Cardiac septum (tissue), 1 donor: ENCODE measurements at regions of chr2 and their contacts with region 1.

Region 1: DNA sequence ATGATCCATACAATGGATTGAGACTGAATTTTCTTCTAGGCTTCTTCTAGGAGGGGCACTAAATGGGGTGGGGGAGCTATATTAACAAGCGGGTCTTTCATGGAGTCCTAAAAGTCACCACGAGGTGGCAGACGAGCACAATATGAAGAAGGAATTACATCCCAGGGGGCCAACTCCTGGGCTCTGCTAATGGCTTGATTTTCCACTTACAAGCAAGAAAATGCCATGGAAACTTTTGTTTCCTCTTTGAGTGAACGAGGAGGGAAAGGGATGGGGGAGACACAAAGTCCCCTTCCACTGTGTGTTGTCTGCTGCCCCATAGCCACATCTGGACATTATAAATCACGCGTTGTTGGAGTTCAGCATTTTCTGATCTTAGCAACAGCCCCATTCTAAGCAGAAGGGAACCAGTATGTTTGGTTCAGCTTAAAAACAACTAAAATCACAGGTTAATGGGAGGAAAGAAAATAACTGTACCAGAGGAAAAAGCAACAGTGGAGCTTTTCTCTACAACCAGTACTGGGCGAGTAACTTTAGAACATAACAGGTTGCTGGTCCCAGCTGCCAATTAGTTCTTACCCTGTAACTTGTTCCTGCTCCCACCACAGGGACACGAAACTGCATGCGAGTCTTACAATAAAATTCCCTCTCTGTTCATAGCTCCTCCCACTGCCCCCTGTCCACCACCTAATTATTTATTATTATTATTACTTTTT is 285.0 kb upstream of the PARD3B start:
- DNase-seq: no peak

Region 2: DNA sequence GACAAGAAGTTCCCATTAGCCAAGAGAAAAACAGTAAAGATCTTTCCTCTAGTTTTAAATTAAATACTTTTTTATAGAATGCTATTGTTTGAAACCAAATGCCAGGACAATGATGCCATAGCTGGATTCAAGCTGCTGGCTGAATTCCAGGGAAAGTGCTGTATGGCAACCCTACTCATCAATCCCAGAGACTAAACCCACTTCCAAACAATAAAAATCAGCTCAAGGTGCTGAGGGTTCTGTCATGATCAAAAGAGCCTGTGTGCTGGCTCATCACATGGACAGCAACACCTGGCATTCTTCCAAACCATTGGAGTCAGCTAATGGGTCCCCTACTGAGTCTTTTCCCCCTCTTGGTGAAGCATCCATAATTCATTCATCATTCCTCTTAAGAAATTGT is 231.2 kb after region 1 on chr2:
- intact Hi-C with region 1: no loop called
- DNase-seq: no peak

Region 3: DNA sequence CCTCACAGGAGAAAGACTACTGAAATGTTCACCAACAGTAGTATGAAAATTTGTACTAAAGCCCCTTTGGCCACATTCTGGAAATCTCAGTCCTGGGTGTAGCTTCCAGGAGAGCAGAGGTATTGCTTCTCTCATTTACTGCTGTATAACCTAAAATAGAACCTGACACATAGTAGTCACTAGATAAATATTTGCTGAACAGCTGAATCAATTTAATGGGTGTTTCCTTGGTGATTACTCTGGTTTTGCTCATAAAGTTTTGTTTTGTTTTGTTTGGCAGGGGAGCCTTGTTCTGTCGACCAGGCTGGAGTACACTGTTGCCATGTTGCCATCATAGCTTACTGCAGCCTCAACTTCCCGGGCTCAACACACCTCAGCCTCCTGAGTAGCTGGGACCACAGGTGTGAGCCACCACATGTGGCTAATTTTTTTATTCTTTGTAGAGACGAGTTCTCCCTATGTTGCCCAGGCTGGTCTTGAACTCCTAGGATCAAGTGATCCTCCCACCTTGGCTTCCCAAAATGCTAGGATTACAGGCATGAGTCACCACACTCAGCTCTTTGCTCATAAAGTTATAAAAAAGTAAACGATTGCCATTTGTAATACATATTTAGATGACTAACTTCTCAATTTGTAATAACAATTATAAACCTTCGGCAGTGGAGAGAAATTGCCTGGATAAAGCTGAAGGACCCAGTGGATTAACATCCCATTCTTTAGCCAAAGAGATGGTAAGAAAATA is 273.5 kb after region 1 on chr2:
- intact Hi-C with region 1: no loop called
- DNase-seq: no peak

Region 4: GRCh38 chr2:204691911-204692510 is 431.7 kb after region 1 on chr2:
- intact Hi-C with region 1: loop called (anchors 2 kb)
- DNase-seq: no peak

Region 5: GRCh38 chr2:204900910-204901309 is 640.6 kb after region 1 on chr2:
- intact Hi-C with region 1: no loop called
- DNase-seq: no peak